ENCODE measurements at regions of chr4 and their contacts with region 1.

Region 1: DNA sequence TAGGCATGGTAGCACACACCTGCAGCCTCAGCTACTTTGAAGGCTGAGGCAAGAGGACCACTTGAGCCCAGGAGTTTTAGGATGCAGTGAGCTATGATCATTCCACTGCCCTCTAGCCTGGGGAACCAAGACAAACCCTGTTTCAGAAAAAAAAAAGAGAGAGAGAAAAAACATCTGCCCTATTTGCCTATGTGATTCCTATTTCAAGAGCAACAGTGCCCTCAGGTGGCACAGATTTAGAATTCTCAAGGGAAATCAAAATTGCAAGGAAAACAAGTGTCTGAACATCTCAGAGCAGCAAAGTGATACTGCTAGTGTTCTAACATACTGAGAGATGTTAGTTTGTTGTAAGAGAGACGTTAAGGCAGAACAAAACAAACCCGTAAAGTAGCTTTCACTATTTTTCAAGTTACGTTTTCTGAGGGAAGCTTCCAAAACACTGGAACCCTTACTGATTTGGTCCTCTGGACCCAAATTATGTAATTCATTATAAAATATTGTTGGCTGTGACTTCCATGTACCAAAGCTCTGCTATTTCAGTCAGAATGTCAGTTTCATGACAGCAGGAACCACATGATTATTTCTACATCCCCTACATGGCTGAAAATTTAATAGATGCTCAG is 7.9 kb downstream of the BDH2 start:
- H3K4me3 Mint-ChIP-seq: no peak overlapping the region
- H3K27ac Mint-ChIP-seq: no peak overlapping the region
- H3K4me1 Mint-ChIP-seq: no peaks in the 10 kb centered on the region
- H3K27me3 Mint-ChIP-seq: no peaks in the 10 kb centered on the region

Region 2: DNA sequence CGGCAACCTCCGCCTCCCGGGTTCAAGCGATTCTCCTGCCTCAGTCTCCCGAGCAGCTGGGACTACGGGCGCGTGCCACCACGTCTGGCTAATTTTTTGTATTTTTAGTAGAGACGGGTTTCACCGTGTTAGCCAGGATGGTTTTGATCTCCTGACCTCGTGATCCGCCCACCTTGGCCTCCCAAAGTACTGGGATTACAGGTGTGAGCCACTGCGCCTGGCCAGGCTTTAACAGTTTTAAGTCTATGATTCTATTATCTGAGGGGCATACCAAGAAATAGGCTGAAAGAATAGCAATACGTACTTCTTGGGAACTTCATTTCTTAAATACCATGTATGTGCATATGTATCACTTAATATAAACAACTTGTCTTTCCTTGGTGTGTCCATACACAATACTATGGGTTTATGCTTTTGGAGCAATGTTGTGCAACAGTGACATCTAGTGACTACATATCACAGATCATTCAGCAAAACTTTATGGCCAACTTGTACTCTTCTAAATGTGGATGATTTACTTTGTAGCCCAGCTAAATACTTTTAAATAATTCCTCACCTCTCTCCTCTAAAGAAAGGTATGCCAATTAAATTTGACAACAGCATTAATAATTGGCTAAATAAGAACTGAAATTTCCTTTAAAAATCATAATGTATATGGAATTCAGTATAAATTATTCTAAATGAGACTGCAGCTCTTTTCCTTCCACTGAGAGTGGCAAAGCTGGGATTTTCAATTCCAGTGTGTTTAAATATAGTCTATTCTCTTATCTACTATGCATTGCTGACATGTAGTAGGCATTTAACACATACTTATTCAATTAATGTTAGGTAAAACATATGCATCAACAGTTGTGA is 82.6 kb before region 1 on chr4:
- intact Hi-C with region 1: loop called (anchors 1 kb)
- H3K4me3 Mint-ChIP-seq: no peak overlapping the region
- H3K27ac Mint-ChIP-seq: no peak overlapping the region
- H3K4me1 Mint-ChIP-seq: no peaks in the 10 kb centered on the region
- H3K27me3 Mint-ChIP-seq: no peaks in the 10 kb centered on the region

Region 3: DNA sequence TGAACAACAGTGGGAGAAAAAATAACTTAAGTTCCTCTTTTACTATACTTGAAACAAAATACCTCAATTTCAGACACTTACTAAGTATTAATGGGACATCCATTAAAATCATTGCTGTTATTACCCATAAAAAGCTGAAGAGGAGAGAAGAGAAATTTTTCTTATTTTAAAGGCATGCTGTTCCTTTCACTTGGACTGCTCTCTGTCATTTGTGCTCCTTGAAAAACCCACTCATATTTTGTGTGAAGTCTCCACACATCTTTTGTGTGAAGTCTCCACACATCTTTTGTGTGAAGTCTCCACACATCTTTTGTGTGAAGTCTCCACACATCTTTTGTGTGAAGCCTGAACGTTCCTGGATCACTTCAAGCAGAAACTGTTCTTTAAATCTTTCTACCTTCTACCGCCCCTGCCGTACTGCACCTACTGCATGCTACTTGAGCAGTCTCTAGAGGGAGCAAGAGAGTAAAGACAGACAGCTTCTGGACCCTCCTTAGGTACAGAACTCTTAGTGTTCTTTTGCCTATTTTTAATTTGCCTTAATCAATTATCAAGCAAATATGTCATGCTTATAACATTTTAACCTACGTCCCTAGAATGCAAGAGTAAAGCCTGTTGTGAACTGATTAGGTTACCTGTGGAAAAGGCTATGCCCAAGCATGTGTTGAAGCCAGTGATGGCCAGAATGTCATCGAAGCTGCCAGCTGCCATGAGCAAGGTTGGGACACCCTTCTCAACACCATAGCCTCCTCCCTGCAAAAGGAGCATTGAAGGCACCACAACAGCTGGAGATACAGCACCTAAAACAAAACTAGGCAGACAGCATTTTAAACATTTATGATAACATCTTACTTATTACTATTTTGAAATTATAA is 45.1 kb before region 1 on chr4:
- intact Hi-C with region 1: loop called (anchors 5 kb)
- H3K4me3 Mint-ChIP-seq: no peak overlapping the region
- H3K27ac Mint-ChIP-seq: no peak overlapping the region
- H3K4me1 Mint-ChIP-seq: no peaks in the 10 kb centered on the region
- H3K27me3 Mint-ChIP-seq: no peaks in the 10 kb centered on the region

Region 4: GRCh38 chr4:103292373-103292772 is 200.7 kb after region 1 on chr4:
- intact Hi-C with region 1: no loop called
- H3K4me3 Mint-ChIP-seq: no peak overlapping the region
- H3K27ac Mint-ChIP-seq: no peak overlapping the region
- H3K4me1 Mint-ChIP-seq: no peaks in the 10 kb centered on the region
- H3K27me3 Mint-ChIP-seq: no peaks in the 10 kb centered on the region